ENCODE measurements at regions of chr17 and their contacts with region 1.

Region 1: DNA sequence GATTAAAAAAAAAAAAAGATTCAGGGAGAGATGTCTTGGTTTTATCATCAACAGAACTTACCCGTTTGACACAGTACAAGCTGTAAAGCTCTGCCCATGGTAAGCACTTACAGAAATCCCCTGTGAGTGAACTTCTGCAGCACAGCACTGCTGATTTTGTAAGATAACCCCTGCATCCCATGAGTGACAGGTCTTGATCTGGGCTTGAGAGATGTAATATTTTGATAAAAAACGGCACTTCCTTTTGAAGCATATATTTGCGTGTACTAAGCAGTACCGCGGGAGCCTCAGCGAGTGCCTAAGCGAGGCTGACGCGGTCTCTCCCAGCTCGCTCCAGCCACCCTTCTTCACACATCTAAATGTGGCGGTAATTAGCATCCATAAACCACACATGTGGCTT is 50.5 kb downstream of the IKZF3 start:
- DNase-seq: peak; percentile 66
- ATAC-seq: peak; percentile 90
- H3K4me3 Mint-ChIP-seq: peak overlapping the region; percentile 70
- H3K27ac Mint-ChIP-seq: peak overlapping the region; percentile 85
- H3K4me1 Mint-ChIP-seq: peaks cover 59% of the 10 kb centered on the region
- H3K27me3 Mint-ChIP-seq: no peaks in the 10 kb centered on the region

Region 2: DNA sequence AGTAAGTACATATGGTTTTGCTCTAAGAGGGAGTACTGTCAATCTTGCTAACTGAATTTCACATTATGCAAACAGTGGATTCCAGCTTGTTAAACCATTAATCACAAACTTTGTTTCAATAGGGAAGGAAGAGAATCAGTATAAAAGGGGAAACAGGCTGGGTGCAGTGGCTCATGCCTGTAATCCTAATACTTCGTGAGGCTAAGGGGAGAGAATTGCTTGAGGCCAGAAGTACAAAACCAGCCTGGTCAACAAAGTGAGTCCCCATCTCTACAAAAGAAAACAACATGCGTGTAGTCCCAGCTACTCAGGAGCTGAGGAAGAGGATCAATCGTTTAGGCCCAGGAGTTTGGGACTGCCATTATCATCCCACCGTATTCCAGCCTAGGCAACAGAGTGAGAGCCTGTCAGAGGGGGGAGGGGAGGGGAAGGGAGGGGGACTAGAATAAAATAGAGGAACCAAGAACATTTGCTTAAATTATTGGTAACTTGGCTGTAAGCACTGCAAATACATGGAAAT is 477.9 kb before region 1 on chr17:
- CTCF ChIA-PET with region 1: no interaction called
- POLR2A ChIA-PET with region 1: no interaction called
- intact Hi-C with region 1: no loop called
- DNase-seq: no peak
- ATAC-seq: no peak
- H3K4me3 Mint-ChIP-seq: no peak overlapping the region
- H3K27ac Mint-ChIP-seq: no peak overlapping the region
- H3K4me1 Mint-ChIP-seq: no peaks in the 10 kb centered on the region
- H3K27me3 Mint-ChIP-seq: no peaks in the 10 kb centered on the region

Region 3: DNA sequence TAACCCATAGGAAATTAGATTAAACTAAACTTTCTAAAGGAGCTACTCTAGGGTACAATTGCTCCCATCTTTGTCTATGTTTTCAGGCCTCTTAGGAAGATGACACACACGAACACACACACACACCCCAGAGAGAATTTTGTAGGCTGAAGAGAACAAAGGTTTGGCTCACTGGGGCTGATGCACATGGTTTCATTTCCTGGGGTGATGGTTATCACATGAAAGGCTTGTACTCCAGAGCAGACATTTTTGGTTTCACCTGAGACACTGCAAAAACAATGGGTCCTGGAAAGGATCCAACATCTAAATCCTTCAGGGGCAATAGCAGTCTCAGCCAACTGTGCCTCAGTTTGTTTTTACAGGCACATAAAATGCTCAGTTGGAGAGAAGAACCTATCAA is 13.1 kb before region 1 on chr17:
- CTCF ChIA-PET with region 1: interaction called, 7 read pairs
- POLR2A ChIA-PET with region 1: interaction called, 4 read pairs
- intact Hi-C with region 1: loop called in 1 of 2 experiments (anchors 1 kb)
- DNase-seq: peak; percentile 69
- ATAC-seq: peak; percentile 100
- H3K4me3 Mint-ChIP-seq: peak overlapping the region; percentile 12
- H3K27ac Mint-ChIP-seq: peak overlapping the region; percentile 83
- H3K4me1 Mint-ChIP-seq: peaks cover 54% of the 10 kb centered on the region
- H3K27me3 Mint-ChIP-seq: no peaks in the 10 kb centered on the region